Aorta (tissue), 5 donors: ENCODE measurements at regions of chr3 and their contacts with region 1.

Region 1: GRCh38 chr3:126357295-126358037 is at the start of gene KLF15:
- DNase-seq: peak; percentile 90 to 95
- ATAC-seq: peak; percentile 90
- H3K4me3 ChIP-seq: peak within 1 kb of the TSS; percentile 90 to 98
- H3K27ac ChIP-seq: peak within 1 kb of the TSS; percentile 91 to 97
- H3K4me1 ChIP-seq: peaks cover 3% of the 10 kb centered on the region in 2 donors
- H3K27me3 ChIP-seq: no peaks in the 10 kb centered on the region
- total RNA-seq, gene KLF15: 8.5 to 39.9 TPM

Region 2: DNA sequence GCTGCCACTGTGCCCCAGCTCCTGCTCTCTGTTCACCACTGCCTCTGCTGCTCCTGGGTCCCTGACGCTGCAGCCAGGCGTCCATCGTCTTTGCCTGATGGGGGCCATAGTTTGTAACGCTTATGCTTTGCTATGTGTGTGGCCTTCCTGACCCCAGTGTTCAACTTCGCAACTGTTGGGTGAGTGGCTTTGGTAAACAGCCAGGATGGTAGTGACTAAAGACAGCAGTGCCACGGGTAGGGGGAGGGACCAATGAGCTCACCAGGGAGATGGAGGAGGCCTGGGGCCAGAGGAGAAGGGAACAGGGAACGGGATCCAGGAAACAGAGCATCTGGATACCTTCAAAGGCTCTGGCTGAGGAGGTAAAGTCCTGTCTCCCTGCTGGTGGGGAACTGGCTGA is 101.2 kb before region 1 on chr3:
- intact Hi-C with region 1: no loop called
- DNase-seq: no peak
- ATAC-seq: no peak
- H3K4me3 ChIP-seq: no peak overlapping the region
- H3K27ac ChIP-seq: no peak overlapping the region
- H3K4me1 ChIP-seq: no peaks in the 10 kb centered on the region
- H3K27me3 ChIP-seq: no peaks in the 10 kb centered on the region

Region 3: DNA sequence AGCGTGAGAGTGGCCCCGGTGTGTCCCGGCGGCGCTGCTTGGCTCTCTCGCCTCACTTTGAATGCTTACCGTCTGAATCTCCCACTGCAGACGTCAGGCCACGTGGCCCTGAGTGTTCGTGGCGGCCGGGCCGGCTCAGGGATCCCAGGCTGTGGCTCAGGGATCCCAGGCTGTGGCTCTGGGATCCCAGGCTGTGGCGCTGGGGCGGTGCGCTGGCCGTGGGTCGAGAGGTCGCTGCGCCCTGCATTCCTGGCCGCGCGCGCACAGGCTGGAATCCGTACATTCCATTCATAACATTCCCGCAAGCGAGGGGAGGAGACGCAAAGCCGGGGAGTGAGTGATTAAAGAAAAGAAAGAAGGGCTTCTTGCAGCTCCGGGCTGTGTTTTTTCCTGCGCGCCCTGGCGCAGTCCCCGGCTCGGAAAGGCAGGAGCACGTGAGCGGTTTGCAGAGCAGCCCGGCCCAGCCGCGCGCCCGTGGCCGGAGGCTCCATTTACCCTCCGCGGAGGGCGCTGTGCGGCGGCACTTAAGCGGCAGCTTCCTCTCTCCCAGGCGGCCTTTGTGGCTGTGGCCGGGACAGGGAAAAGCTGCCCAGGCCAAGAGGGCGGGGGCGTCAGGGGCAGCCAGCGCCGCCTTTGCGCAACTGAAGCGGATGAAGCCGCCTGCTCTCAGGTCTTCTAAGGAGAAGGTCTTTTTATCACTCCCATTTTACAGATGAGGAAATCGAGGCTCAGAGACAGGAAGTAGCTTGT is 90.1 kb before region 1 on chr3:
- intact Hi-C with region 1: loop called (anchors 1 to 2 kb)
- DNase-seq: peak; percentile 86 to 94
- ATAC-seq: peak; percentile 83
- H3K4me3 ChIP-seq: no peak overlapping the region
- H3K27ac ChIP-seq: peak overlapping the region; percentile 87 to 97
- H3K4me1 ChIP-seq: no peaks in the 10 kb centered on the region
- H3K27me3 ChIP-seq: no peaks in the 10 kb centered on the region

Region 4: DNA sequence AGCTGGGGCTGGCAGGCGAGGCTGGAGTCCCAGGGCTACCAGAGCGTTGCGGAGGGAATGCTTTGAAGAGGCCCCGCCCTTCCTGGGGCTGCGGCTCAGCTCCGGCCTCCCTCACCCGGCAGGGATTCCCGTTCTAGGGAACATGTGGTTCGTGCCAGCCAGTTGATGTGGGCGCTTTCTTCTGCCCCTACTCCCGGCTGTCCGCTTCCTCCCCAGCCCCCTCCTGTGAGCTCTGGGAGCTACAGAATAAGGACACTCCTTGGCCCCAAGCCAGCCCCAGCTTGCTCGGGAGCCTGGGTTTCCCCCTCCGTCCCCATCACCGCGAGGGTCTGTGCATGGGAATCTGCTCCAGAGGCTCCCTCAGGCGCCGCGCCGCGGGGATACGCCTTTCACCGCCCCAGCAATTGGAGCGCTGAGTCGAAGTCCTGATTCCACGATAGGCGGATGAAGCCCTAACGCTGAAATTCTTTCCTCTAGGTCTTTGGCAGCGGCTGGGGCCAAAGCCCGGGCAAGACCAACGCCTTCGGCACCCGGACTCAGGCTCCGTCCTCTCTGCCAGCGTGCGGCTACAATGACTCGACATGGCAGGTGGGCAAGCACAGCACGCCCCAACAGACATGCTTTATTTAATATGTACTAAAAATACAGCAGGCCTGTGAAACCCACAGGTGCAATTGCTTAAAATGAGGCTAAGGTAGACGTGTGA is 69.8 kb before region 1 on chr3:
- intact Hi-C with region 1: loop called (anchors 5 kb)
- DNase-seq: peak; percentile 82 to 91
- ATAC-seq: peak; percentile 89
- H3K4me3 ChIP-seq: peak overlapping the region in 1 of 2 donors; percentile 17
- H3K27ac ChIP-seq: peak overlapping the region; percentile 85 to 92
- H3K4me1 ChIP-seq: no peaks in the 10 kb centered on the region
- H3K27me3 ChIP-seq: no peaks in the 10 kb centered on the region

Region 5: DNA sequence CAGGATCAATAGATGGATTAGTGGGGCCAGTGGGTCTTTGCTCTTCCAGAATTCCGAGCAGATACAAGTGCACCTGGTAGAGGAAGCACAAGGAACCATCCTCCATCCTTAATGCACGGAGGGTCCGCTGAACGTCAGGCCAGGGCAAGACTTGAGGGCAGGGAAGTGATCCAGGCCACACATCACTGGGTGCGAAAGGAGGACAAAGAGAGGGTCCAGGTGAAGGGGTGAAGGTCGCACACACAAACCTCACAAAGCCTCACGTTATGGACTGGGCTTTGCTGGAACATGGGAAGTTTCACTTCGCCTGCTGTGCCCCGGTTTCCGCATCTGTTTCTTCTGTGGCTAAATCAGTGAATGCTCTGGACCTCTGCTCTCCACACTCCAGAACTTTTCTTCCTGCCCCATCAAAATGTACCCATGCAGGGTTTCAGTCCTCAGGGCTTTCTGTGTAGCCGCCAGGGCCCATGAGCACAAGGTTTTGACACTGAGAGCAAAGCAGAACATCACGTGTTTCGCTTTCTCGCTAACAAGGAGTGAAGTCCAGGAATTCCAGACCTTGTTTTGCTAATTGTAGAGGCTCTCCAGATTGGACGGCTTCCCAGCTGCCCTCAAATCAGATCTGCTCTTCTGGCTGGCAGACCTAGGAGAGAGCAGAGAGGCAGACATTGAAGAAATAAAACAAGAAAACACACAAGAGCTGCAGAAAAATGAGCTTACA is 56.5 kb before region 1 on chr3:
- intact Hi-C with region 1: loop called in 1 of 2 experiments (anchors 5 kb)
- DNase-seq: peak in 1 of 2 donors; percentile 75
- ATAC-seq: no peak
- H3K4me3 ChIP-seq: no peak overlapping the region
- H3K27ac ChIP-seq: peak overlapping the region in 1 of 2 donors; percentile 53
- H3K4me1 ChIP-seq: no peaks in the 10 kb centered on the region
- H3K27me3 ChIP-seq: no peaks in the 10 kb centered on the region

Region 6: GRCh38 chr3:126493739-126494138 is 136.3 kb after region 1 on chr3:
- intact Hi-C with region 1: no loop called
- DNase-seq: no peak
- ATAC-seq: no peak
- H3K4me3 ChIP-seq: no peak overlapping the region
- H3K27ac ChIP-seq: no peak overlapping the region
- H3K4me1 ChIP-seq: no peaks in the 10 kb centered on the region
- H3K27me3 ChIP-seq: no peaks in the 10 kb centered on the region